Activated B cell treated with CpG ODN at 0.5 μM for 24 hours (primary cell): ENCODE measurements at regions of chr1 and their contacts with region 1.

Region 1: DNA sequence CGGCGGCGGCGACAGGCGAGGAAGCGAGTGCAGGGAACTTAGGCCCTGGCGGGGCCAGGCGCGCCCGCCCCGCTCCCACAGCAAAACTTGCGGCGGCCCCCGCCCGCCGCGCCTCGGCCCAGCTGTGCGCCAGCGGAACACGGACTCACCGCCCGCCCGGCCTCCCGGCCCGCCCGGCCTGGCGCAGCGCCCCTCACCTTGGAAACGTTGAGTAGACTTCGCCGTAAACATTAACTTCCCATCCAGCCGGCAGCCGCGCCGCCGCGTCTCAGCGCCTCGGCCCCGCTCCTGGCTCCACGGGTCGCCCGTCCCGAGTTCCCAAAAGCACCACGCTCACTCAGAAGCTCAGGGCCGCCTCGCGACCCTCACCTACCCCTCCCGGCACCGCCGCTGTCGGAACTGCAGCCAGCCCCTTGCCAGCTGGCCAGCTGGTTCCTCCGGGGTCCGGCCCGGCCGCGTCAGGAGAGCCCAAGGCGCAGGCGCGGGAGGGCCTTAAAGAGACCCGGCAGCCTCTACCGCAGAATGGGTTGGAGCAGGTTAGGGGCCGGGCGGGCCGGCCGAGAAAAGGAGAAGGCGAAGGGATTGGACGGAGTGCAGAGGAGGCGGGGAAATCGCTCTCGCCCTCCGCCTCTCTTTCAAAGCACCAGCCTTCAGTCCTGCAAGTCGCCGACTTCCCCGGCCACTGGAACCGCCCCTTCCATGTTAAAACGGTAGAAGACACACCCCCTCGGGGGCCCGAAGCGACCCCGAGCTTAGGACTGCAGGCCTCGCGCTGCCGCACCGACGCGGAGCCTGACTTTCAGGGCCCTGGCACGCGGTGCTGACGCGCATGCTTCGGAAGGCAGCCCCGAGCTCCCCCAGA is at the start of gene EVI5:
- DNase-seq: peak; percentile 86
- ATAC-seq: peak; percentile 92
- H3K4me3 Mint-ChIP-seq: peak within 1 kb of the TSS; percentile 92
- H3K27ac Mint-ChIP-seq: peak within 1 kb of the TSS; percentile 91
- H3K4me1 Mint-ChIP-seq: peaks cover 31% of the 10 kb centered on the region
- H3K27me3 Mint-ChIP-seq: no peaks in the 10 kb centered on the region
- CTCF ChIP-seq: no peak
- total RNA-seq, gene EVI5: 18.2 and 27.4 TPM in 2 replicates

Region 2: GRCh38 chr1:91500756-91501522 is 1283.9 kb before region 1 on chr1 and contains the start of gene CDC7:
- CTCF ChIA-PET with region 1: interaction called, 4 read pairs
- POLR2A ChIA-PET with region 1: no interaction called
- intact Hi-C with region 1: loop called (anchors 5 kb)
- DNase-seq: peak; percentile 83
- ATAC-seq: peak; percentile 88
- H3K4me3 Mint-ChIP-seq: no peak within 1 kb of the TSS
- H3K27ac Mint-ChIP-seq: no peak within 1 kb of the TSS
- H3K4me1 Mint-ChIP-seq: peaks cover 16% of the 10 kb centered on the region
- H3K27me3 Mint-ChIP-seq: no peaks in the 10 kb centered on the region
- CTCF ChIP-seq: no peak
- total RNA-seq, gene CDC7: 5.8 and 7.3 TPM in 2 replicates

Region 3: DNA sequence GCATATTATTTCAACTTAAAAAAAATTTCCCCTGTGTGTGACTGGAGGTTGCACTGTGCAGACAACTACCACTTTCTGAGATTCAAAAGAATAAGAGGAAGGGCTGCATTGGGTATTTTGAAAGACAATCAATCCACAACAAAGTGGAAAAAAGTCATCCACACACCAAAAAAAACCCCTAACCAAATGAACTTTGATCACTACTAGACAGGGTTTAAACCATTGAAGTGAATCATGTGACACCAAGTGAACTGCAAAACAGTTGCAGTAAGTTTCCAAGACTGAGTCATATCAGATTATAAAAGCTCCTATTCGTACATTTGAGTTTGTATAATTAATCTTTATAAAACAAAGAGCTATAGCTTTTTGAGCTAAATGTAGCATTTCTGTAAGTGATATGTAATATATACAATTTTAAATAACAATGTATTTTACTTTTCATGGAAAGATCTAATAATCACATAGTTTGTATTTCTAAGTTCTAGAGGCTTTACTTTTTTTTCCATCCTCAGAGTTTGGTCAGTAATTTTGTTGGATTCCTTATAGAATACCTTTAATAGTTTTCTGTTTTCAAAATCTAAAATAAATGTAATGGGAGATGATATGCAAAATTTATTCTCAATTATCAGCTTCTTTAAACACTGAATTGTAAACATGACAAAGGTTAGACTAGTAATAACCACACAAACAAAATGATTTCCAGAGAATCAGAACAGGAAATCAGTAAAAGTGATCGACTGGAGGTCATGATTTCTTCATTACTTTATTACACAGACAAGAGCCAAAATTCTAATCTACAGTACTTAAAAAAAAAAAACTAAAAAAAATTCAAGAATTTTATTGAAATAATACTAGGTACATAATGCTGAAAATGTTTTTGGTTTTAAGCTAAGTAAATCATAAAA is 247.6 kb before region 1 on chr1:
- CTCF ChIA-PET with region 1: no interaction called
- POLR2A ChIA-PET with region 1: no interaction called
- intact Hi-C with region 1: loop called (anchors 10 kb)
- DNase-seq: no peak
- ATAC-seq: peak; percentile 75
- H3K4me3 Mint-ChIP-seq: peak overlapping the region; percentile 59
- H3K27ac Mint-ChIP-seq: peak overlapping the region; percentile 65
- H3K4me1 Mint-ChIP-seq: peaks cover 45% of the 10 kb centered on the region
- H3K27me3 Mint-ChIP-seq: no peaks in the 10 kb centered on the region
- CTCF ChIP-seq: no peak

Region 4: DNA sequence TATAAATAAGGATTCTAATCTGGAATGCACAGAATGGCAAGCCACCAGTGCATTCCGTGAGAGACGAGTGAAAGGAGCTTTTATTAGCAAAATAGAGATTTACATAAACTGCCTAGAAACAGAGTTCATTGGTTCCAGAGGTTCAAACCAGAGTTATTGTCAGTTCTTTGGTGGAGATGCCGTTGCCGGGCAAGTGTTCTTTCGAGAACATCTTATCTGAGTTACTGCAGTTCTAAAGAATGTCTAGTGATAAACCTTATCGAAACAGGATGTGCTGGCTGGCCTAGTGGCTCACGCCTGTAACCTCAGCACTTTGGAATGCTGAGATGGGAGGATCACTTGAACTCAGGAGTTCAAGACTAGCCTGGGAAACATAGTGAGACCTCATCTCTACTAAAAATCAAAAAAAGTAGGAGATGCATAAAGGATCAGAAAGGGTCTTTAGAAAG is 19.9 kb after region 1 on chr1:
- CTCF ChIA-PET with region 1: no interaction called
- POLR2A ChIA-PET with region 1: no interaction called
- intact Hi-C with region 1: loop called (anchors 1 kb)
- DNase-seq: no peak
- ATAC-seq: peak; percentile 99
- H3K4me3 Mint-ChIP-seq: peak overlapping the region; percentile 47
- H3K27ac Mint-ChIP-seq: peak overlapping the region; percentile 88
- H3K4me1 Mint-ChIP-seq: peaks cover 15% of the 10 kb centered on the region
- H3K27me3 Mint-ChIP-seq: no peaks in the 10 kb centered on the region
- CTCF ChIP-seq: no peak

Region 5: GRCh38 chr1:92831762-92832536 is 47.1 kb after region 1 on chr1 and contains the start of gene RPL5:
- CTCF ChIA-PET with region 1: no interaction called
- POLR2A ChIA-PET with region 1: interaction called, 16 read pairs
- intact Hi-C with region 1: loop called (anchors 1 kb)
- DNase-seq: peak; percentile 98
- ATAC-seq: peak; percentile 90
- H3K4me3 Mint-ChIP-seq: peak within 1 kb of the TSS; percentile 99
- H3K27ac Mint-ChIP-seq: peak within 1 kb of the TSS; percentile 97
- H3K4me1 Mint-ChIP-seq: peaks cover 48% of the 10 kb centered on the region
- H3K27me3 Mint-ChIP-seq: no peaks in the 10 kb centered on the region
- CTCF ChIP-seq: no peak
- total RNA-seq, gene RPL5: 1,685 and 1,766 TPM in 2 replicates

Region 6: GRCh38 chr1:93033785-93034184 is 248.9 kb after region 1 on chr1:
- CTCF ChIA-PET with region 1: no interaction called
- POLR2A ChIA-PET with region 1: no interaction called
- intact Hi-C with region 1: no loop called
- DNase-seq: no peak
- ATAC-seq: peak; percentile 85
- H3K4me3 Mint-ChIP-seq: no peak overlapping the region
- H3K27ac Mint-ChIP-seq: peak overlapping the region; percentile 37
- H3K4me1 Mint-ChIP-seq: peaks cover 30% of the 10 kb centered on the region
- H3K27me3 Mint-ChIP-seq: no peaks in the 10 kb centered on the region
- CTCF ChIP-seq: no peak

Region 7: DNA sequence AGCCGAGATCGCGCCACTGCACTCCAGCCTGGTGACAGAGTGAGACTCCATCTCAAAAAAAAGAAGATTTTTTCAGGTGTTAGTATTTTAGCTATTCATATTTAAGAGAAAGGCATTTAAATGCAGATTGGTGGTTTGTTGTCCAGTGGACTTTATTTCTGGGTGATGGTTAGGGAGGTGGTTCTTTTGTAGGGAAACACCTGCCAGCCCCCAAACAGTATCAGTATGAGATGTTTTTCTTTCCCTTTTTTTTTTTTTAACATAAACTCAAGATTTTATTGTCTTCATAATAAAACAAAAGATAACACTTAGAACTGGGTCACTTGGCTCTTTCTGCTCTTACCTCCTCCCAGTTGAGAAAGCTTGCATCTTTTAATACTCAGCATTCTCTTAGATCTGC is 405.6 kb after region 1 on chr1:
- CTCF ChIA-PET with region 1: no interaction called
- POLR2A ChIA-PET with region 1: no interaction called
- intact Hi-C with region 1: no loop called
- DNase-seq: no peak
- ATAC-seq: no peak
- H3K4me3 Mint-ChIP-seq: no peak overlapping the region
- H3K27ac Mint-ChIP-seq: no peak overlapping the region
- H3K4me1 Mint-ChIP-seq: peaks cover 39% of the 10 kb centered on the region
- H3K27me3 Mint-ChIP-seq: no peaks in the 10 kb centered on the region
- CTCF ChIP-seq: no peak

Region 8: DNA sequence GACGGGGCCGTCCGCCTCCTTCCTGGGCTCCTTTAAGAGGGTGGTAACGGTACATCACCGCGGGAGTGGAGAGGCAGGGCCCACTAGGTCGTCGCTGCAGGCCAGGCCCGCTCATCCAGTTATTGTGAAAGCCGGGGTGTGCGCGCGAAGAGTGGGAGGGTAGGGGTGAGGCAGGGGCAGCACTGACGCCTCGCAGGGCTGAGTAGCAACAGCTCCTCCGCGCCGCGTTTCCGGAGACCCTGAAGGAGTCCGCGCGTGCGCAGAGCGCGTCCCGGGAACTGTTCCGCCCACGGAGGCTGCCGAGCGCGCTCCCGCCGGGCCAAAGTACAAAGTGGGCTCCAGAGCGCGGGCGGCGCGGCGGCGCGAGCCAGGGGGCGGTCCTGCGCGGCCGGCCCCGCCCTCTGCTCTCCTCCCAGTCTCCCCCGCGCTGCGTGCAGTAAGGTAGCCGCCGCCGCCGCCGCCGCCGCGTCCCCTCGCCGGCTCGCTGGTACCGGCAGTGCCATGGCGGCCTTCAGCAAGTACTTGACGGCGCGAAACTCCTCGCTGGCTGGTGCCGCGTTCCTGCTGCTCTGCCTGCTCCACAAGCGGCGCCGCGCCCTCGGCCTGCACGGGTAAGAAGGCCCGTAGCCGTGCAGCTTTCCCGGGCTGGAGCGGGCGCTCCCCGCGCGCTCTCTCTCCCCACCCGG is 1633.3 kb after region 1 on chr1 and contains the start of gene ABCD3:
- CTCF ChIA-PET with region 1: no interaction called
- POLR2A ChIA-PET with region 1: no interaction called
- intact Hi-C with region 1: loop called (anchors 2 kb)
- DNase-seq: peak; percentile 97
- ATAC-seq: peak; percentile 95
- H3K4me3 Mint-ChIP-seq: no peak within 1 kb of the TSS
- H3K27ac Mint-ChIP-seq: no peak within 1 kb of the TSS
- H3K4me1 Mint-ChIP-seq: peaks cover 17% of the 10 kb centered on the region
- H3K27me3 Mint-ChIP-seq: no peaks in the 10 kb centered on the region
- CTCF ChIP-seq: no peak
- total RNA-seq, gene ABCD3: 20.8 and 23.2 TPM in 2 replicates